Pancreas (tissue), 10 donors: ENCODE measurements at regions of chr12 and their contacts with region 1.

Region 1: DNA sequence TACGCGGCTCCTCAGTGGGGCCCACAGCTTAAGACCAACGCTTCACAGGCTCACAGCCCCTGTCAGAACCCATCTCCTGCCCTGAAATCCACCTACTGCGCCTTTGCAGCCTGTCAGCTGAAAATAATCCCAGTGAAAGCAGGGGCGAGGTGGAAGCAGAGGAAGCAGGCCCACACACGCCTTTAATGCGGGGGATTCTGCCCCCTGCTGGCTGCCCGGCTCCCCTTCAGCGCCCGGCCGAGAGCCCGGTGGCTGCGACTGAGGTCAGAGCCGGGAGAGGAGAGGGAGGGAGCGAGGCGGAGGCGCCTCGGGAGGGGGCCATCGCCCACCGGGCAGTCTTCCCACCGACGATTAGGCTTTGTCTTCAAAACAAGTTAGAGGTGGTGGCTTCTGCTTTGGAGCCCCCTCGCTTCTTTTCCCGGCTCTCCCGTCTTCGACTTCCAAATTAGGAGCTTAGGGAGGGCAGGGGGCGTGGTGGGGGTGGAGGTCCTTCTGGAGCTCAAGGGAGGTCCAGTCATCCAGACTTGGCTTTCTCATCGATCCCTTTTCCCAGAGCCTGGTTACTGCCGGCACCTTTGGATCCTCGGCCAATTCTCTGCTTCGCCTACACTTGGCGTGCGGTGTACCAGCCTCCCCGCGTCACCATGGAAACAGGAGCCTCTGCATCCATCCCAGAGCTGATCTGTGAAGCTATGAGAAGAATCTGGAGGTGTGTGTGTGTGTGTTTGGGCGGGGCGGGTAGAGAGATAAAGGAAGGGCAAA is 25.2 kb upstream of the RND1 start:
- DNase-seq: peak; percentile 60 to 95 (median 80)
- ATAC-seq: peak; percentile 98 to 100 (median 100)
- H3K4me3 ChIP-seq: peak overlapping the region in 1 of 4 donors; percentile 8
- H3K27ac ChIP-seq: no peak overlapping the region
- H3K4me1 ChIP-seq: peaks cover 0 to 4% (median 0%) of the 10 kb centered on the region in 3 donors
- H3K27me3 ChIP-seq: no peaks in the 10 kb centered on the region
- CTCF ChIP-seq: peak; percentile 89 to 93 (median 90)

Region 2: DNA sequence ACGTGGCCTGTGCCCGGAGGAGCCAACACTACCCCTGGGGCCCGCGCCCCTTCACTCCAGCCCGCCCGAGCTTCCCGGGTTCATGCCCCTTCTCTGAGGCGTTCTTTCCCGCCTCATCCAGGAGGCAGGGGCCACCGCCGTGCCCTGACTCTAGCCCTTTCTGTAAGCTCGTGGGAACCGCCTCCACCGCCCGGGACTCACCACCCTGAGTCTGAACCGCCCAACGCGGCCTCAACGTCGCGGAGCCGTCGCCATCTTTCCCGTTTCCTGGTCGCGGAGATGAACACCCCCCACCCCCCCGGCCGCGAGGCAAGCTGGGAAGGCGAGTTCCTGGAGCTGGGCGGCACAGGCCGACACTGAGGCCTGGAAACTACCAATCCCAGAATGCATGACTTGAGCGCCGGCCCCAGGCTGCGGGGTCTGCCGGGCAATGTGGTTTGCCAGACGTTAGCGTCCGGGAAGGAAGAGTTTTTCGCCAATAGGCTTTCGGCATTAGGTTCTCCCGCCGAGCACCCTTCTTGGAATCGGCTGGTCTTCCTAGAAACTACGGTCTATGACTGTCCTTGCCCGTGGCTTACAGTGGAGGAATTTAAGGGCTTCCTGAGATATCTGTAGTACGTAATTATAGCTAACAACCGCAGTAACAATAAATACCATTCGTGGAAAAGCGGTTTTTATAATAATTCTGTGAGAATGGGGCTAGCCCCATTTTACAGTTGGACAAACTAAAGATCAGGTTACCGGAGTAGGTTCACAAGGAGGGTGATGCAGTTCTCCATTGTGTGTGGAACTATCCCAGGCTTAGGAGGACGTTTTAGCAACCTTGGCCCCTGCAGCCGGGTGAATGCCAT is 38.7 kb before region 1 on chr12 and contains the start of gene DDX23:
- intact Hi-C with region 1: loop called in 2 of 3 experiments (anchors 5 kb)
- DNase-seq: peak; percentile 89 to 96 (median 94)
- ATAC-seq: peak; percentile 95 to 98 (median 97)
- H3K4me3 ChIP-seq: peak within 1 kb of the TSS; percentile 88 to 98 (median 92)
- H3K27ac ChIP-seq: peak within 1 kb of the TSS; percentile 56 to 82 (median 70)
- H3K4me1 ChIP-seq: peaks cover 10 to 15% (median 10%) of the 10 kb centered on the region in 3 donors
- H3K27me3 ChIP-seq: no peaks in the 10 kb centered on the region
- CTCF ChIP-seq: no peak
- total RNA-seq, gene DDX23: 25.9 to 49.3 (median 32.1) TPM

Region 3: GRCh38 chr12:48857278-48857994 is 33.4 kb before region 1 on chr12:
- intact Hi-C with region 1: loop called in 2 of 3 experiments (anchors 5 kb)
- DNase-seq: no peak
- ATAC-seq: no peak
- H3K4me3 ChIP-seq: no peak overlapping the region
- H3K27ac ChIP-seq: no peak overlapping the region
- H3K4me1 ChIP-seq: peaks cover 0 to 5% (median 0%) of the 10 kb centered on the region in 3 donors
- H3K27me3 ChIP-seq: no peaks in the 10 kb centered on the region
- CTCF ChIP-seq: no peak

Region 4: DNA sequence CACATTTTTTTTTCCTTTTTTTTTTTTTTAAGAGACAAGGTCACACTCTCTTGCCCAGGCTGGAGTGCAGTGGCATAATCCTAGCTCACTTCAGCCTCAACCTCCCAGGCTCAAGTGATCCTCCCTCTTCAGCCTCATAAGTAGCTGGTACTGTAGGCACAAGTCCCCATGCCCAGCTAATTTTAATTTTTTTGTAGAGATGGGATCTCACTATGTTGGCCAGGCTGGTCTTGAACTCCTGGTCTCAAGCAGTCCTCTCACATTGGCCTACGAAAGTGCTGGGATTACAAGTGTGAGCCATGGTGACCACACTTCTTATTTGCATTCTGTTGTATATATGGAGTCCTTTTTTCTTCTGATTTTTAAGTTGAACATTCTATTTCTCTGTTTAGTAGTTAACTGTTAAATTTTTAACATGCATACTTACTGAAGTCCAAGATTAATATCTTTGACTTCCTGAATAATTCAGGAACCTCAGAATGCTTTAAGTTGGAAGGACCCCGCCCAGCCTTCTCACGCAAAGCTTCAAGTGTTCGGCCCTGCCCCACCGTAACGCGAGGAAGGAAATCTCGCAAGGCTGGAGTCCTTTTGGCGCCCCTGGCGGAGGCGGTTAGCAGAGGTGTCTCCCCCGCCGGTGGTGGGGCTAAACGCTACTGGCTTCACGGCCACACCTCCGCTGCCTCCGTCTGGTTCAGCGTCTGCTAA is 498.0 kb after region 1 on chr12:
- intact Hi-C with region 1: no loop called
- DNase-seq: no peak
- ATAC-seq: no peak
- H3K4me3 ChIP-seq: no peak overlapping the region
- H3K27ac ChIP-seq: no peak overlapping the region
- H3K4me1 ChIP-seq: no peaks in the 10 kb centered on the region
- H3K27me3 ChIP-seq: no peaks in the 10 kb centered on the region
- CTCF ChIP-seq: no peak